ENCODE measurements at regions of chr18 and their contacts with region 1.

Region 1: DNA sequence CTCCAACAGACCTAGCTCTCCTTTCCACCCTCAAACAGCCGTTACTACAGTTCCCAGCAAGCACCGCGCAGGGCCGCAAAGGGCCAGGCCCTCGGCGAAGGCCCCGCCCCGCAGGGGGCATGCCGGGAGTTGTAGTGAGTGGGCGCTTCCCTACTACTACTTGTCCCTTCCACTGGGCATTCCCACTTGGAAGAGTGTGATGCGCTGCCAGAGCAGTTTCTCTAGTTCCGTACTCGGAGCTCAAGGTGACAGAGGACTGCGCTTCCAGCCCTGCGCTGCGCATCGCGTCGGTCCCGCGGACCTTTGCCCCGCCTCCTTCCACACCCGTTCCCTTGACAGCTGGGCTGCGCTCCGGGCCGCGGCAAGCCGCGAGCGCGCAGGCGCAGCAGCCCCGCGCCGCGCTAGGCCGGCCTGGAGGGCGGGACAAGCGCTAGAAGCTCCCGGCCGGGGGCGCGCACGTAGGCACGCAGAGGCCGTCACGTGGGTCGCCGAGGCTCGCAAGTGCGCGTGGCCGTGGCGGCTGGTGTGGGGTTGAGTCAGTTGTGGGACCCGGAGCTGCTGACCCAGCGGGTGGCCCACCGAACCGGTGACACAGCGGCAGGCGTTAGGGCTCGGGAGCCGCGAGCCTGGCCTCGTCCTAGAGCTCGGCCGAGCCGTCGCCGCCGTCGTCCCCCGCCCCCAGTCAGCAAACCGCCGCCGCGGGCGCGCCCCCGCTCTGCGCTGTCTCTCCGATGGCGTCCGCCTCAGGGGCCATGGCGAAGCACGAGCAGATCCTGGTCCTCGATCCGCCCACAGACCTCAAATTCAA is at the start of gene VAPA:
- DNase-seq: peak; percentile 96 to 99 (median 98)
- ATAC-seq: peak; percentile 81
- H3K4me3 ChIP-seq: peak within 1 kb of the TSS; percentile 85
- H3K27ac ChIP-seq: peak within 1 kb of the TSS; percentile 97
- H3K4me1 ChIP-seq: peaks cover 7 to 9% of the 10 kb centered on the region in 2 experiments
- H3K27me3 ChIP-seq: no peaks in the 10 kb centered on the region
- CTCF ChIP-seq: peak in 1 of 3 experiments; percentile 9; a peak in 1 of 6 replicates
- EP300 ChIP-seq: peak; percentile 49
- POLR2A ChIP-seq: peak; percentile 96
- RAD21 ChIP-seq: peak; percentile 4 to 20; a peak in 2 of 4 replicates
- polyA plus RNA-seq, gene VAPA: 219 to 224 TPM

Region 2: DNA sequence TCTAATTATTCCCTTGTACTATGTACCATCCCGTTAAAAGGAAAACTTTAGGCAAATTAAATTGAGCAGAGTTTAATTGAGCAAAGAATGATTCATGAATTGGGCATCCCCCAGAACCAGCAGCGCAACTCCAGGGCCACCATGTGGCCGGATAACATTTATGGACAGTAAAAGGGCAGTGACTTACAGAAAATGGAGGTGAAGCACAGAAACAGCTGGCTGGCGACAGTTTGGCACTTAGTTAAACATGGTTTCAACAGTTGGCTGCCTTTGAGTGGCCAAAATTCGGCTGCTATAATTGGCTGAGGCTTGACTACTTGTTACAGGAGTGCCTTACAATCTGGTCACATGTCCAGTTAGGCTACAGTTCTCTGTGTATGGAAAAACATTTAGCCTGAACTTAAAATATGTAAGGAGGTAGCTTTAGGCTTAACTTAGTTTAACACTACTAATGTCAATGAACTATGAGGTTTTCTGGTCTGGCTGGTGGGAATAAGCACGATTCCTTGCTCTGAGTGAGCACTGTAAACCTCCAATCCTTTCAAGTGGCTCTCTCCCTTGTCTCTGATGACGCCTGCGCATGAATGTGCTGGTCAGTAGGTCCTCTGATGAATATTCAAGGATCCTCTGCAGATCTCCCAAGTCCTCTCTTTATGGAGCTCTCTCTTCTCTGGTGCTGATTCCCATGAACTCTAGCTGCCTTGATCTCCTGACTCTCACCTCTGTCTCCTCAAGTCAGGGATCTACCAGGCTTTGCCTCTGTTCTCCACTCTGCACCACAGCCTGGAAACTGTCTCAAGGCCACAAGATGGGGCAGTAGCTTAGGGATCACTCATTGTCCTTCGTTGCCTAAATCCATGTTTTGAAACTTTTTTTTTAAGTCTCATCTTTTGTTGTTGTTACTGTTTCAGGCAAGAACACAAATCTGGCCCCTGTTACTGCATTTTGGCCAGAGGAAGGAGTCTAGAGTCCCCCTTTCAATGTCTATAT is 230.0 kb before region 1 on chr18:
- CTCF ChIA-PET with region 1: no interaction called
- POLR2A ChIA-PET with region 1: interaction called, 6 read pairs
- in situ Hi-C with region 1: no loop called
- intact Hi-C with region 1: loop called (anchors 10 kb)
- DNase-seq: peak in 3 of 4 experiments; percentile 51 to 91 (median 63)
- ATAC-seq: peak; percentile 91
- H3K4me3 ChIP-seq: no peak overlapping the region
- H3K27ac ChIP-seq: peak overlapping the region; percentile 81
- H3K4me1 ChIP-seq: peaks cover 10 to 49% of the 10 kb centered on the region in 2 experiments; a peak in 4 of 5 replicates
- H3K27me3 ChIP-seq: no peaks in the 10 kb centered on the region
- CTCF ChIP-seq: peak; percentile 76 to 86 (median 81)
- EP300 ChIP-seq: 0 out of 2 replicates have a peak, but pooled peaks have one; percentile 15
- POLR2A ChIP-seq: no peak
- RAD21 ChIP-seq: peak; percentile 95 to 97

Region 3: DNA sequence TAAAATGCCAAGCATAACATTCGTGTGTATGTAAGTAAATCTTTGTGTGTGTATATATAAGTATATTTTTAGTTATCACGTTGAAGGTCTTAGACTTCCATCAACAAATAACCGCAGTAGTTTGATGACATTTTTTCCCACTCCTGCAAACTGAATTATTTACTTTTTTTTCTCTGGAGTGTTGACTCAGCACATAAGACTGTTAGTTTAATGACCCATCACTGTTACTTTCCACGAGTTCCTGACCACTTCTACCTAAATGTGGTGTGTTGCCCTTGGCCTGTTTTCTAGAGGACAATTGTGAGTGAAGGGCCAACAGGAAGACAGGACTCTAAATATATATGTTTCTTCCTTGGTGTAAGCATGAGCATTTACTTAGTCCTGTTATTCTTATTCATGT is 99.3 kb before region 1 on chr18:
- CTCF ChIA-PET with region 1: no interaction called
- POLR2A ChIA-PET with region 1: interaction called, 6 read pairs
- in situ Hi-C with region 1: no loop called
- intact Hi-C with region 1: loop called (anchors 5 kb)
- DNase-seq: no peak
- ATAC-seq: no peak
- H3K4me3 ChIP-seq: no peak overlapping the region
- H3K27ac ChIP-seq: peak overlapping the region; percentile 18; the same call in 1 of the 3 replicates
- H3K4me1 ChIP-seq: peaks cover 11 to 34% of the 10 kb centered on the region in 2 experiments; a peak in 4 of 5 replicates
- H3K27me3 ChIP-seq: no peaks in the 10 kb centered on the region
- CTCF ChIP-seq: no peak
- EP300 ChIP-seq: no peak
- POLR2A ChIP-seq: no peak
- RAD21 ChIP-seq: no peak

Region 4: GRCh38 chr18:9869715-9870430 is 43.9 kb before region 1 on chr18:
- CTCF ChIA-PET with region 1: no interaction called
- POLR2A ChIA-PET with region 1: interaction called, 14 read pairs
- in situ Hi-C with region 1: no loop called
- intact Hi-C with region 1: no loop called
- DNase-seq: peak; percentile 83 to 97 (median 89)
- ATAC-seq: peak; percentile 89
- H3K4me3 ChIP-seq: no peak overlapping the region
- H3K27ac ChIP-seq: peak overlapping the region; percentile 92
- H3K4me1 ChIP-seq: peaks cover 23 to 67% of the 10 kb centered on the region in 2 experiments
- H3K27me3 ChIP-seq: no peaks in the 10 kb centered on the region
- CTCF ChIP-seq: no peak
- EP300 ChIP-seq: peak; percentile 99
- POLR2A ChIP-seq: peak; percentile 42; the same call in 1 of the 2 replicates
- RAD21 ChIP-seq: peak in 1 of 2 experiments; percentile 47; a peak in 3 of 4 replicates

Region 5: DNA sequence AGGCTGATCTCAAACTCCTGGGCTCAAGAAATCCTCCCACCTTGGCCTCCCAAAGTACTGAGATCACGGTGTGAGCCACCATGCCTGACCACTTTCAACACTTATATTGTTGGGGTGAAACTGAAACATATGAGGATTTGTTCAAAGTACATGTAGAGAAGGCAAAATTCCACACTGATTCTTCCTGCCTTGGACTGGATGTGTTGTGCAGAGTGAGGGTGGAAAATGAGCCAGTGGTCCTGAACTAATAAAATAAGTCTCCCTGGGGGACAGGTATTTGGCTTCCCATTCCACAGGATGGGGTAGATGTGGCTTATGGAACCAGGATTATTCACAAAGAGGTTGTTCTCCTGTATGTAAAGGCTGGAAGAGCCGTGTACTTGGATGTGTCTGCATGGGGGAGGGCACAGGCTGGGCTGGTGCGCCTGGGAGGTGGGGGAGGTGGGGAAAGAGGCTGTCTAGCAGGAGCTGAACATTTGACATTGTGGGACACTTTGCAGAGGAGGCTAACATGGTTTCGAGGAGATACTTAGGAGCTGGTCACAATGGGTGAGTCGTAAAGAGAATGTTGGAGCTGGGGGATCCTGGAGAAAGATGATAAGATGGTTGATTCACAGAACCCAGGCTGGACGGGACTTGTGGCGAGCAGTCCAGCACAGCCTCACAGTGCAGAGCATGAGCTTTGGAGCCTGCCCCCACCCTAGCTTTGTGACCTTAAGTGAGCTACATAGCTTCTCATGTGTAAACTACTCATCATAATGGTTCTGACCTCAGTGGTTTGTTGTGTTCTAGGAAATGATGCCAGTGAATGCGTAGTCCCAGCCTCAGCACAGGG is 28.3 kb before region 1 on chr18 and contains the start of gene TXNDC2:
- CTCF ChIA-PET with region 1: no interaction called
- POLR2A ChIA-PET with region 1: interaction called, 13 read pairs
- in situ Hi-C with region 1: no loop called
- intact Hi-C with region 1: no loop called
- DNase-seq: peak; percentile 74 to 97 (median 81)
- ATAC-seq: peak; percentile 82
- H3K4me3 ChIP-seq: no peak within 1 kb of the TSS; the same call in 1 of the 2 replicates
- H3K27ac ChIP-seq: peak within 1 kb of the TSS; percentile 82
- H3K4me1 ChIP-seq: peaks cover 34 to 61% of the 10 kb centered on the region in 2 experiments
- H3K27me3 ChIP-seq: no peaks in the 10 kb centered on the region
- CTCF ChIP-seq: 0 out of 6 replicates have a peak, but pooled peaks of 1 of the 3 experiments have one; percentile 7
- EP300 ChIP-seq: peak; percentile 80; the same call in 1 of the 2 replicates
- POLR2A ChIP-seq: peak; percentile 52
- RAD21 ChIP-seq: peak in 1 of 2 experiments; percentile 30; a peak in 1 of 4 replicates
- polyA plus RNA-seq, gene TXNDC2: 1.2 to 2.3 TPM

Region 6: DNA sequence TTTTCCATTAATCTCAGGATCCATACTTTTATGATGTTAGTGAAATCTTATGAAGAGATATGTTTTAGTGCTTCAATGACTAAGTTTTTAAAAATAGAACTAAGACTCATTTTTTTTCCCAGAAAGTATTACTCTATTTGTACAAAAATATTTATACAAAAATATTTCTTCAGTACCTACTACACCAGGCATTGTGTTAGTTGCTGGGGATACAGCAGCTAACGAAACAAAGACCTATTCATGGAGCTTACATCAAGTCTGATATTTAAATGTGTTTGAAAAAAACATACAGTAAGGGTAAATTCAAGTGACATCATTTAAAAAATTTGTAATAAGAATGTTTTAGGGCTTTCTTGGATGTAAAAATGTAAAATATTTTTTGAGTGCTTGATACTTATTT is 11.6 kb after region 1 on chr18:
- CTCF ChIA-PET with region 1: no interaction called
- POLR2A ChIA-PET with region 1: interaction called, 72 read pairs
- in situ Hi-C with region 1: no loop called
- intact Hi-C with region 1: loop called (anchors 1 kb)
- DNase-seq: no peak
- ATAC-seq: no peak
- H3K4me3 ChIP-seq: no peak overlapping the region
- H3K27ac ChIP-seq: peak overlapping the region; percentile 69; the same call in 2 of the 3 replicates
- H3K4me1 ChIP-seq: peaks cover 5 to 77% of the 10 kb centered on the region in 2 experiments
- H3K27me3 ChIP-seq: no peaks in the 10 kb centered on the region
- CTCF ChIP-seq: no peak
- EP300 ChIP-seq: no peak
- POLR2A ChIP-seq: no peak
- RAD21 ChIP-seq: no peak

Region 7: GRCh38 chr18:9951022-9951859 is 37.5 kb after region 1 on chr18:
- CTCF ChIA-PET with region 1: interaction called, 3 read pairs
- POLR2A ChIA-PET with region 1: interaction called, 7 read pairs
- in situ Hi-C with region 1: no loop called
- intact Hi-C with region 1: loop called (anchors 2 kb)
- DNase-seq: peak; percentile 20 to 79 (median 45)
- ATAC-seq: peak; percentile 66
- H3K4me3 ChIP-seq: no peak overlapping the region
- H3K27ac ChIP-seq: peak overlapping the region; percentile 81
- H3K4me1 ChIP-seq: peaks cover 22 to 54% of the 10 kb centered on the region in 2 experiments; a peak in 4 of 5 replicates
- H3K27me3 ChIP-seq: no peaks in the 10 kb centered on the region
- CTCF ChIP-seq: peak; percentile 68 to 85 (median 80)
- EP300 ChIP-seq: no peak; the same call in 1 of the 2 replicates
- POLR2A ChIP-seq: no peak
- RAD21 ChIP-seq: peak; percentile 55 to 83

Region 8: GRCh38 chr18:10153924-10154752 is 240.4 kb after region 1 on chr18:
- CTCF ChIA-PET with region 1: no interaction called
- POLR2A ChIA-PET with region 1: no interaction called
- in situ Hi-C with region 1: no loop called
- intact Hi-C with region 1: no loop called
- DNase-seq: no peak
- ATAC-seq: no peak
- H3K4me3 ChIP-seq: no peak overlapping the region
- H3K27ac ChIP-seq: no peak overlapping the region
- H3K4me1 ChIP-seq: no peaks in the 10 kb centered on the region
- H3K27me3 ChIP-seq: peaks cover 0 to 23% of the 10 kb centered on the region in 2 experiments; a peak in 2 of 5 replicates
- CTCF ChIP-seq: no peak
- EP300 ChIP-seq: no peak
- POLR2A ChIP-seq: no peak
- RAD21 ChIP-seq: no peak

Measured in K562 (cell line).